ENCODE measurements at regions of chr16 and their contacts with region 1.

Region 1: GRCh38 chr16:58129097-58129936 is at the start of gene CFAP20:
- DNase-seq: peak; percentile 95 to 98
- H3K4me3 ChIP-seq: peak within 1 kb of the TSS; percentile 76 to 95 (median 82)
- H3K27ac ChIP-seq: peak within 1 kb of the TSS; percentile 80; the same call in 1 of the 2 replicates
- H3K4me1 ChIP-seq: peaks cover 2 to 8% (median 5%) of the 10 kb centered on the region in 4 experiments; a peak in 5 of 7 replicates
- H3K27me3 ChIP-seq: no peaks in the 10 kb centered on the region
- CTCF ChIP-seq: no peak
- EP300 ChIP-seq: no peak
- POLR2A ChIP-seq: peak; percentile 62 to 90
- RAD21 ChIP-seq: no peak
- total RNA-seq, gene CFAP20: 43.4 and 45.6 TPM in 2 replicates

Region 2: GRCh38 chr16:58018804-58019203 is 110.5 kb before region 1 on chr16:
- CTCF ChIA-PET with region 1: interaction called, 362 read pairs
- POLR2A ChIA-PET with region 1: interaction called, 20 read pairs
- DNase-seq: peak in 1 of 2 experiments; percentile 69
- H3K4me3 ChIP-seq: no peak overlapping the region
- H3K27ac ChIP-seq: no peak overlapping the region
- H3K4me1 ChIP-seq: peaks cover 0 to 12% (median 7%) of the 10 kb centered on the region in 4 experiments; a peak in 5 of 7 replicates
- H3K27me3 ChIP-seq: no peaks in the 10 kb centered on the region; a peak in 2 of 7 replicates
- CTCF ChIP-seq: peak; percentile 54 to 76 (median 74)
- EP300 ChIP-seq: no peak
- POLR2A ChIP-seq: no peak
- RAD21 ChIP-seq: peak; percentile 52 to 64; a peak in 3 of 4 replicates

Region 3: GRCh38 chr16:58025351-58026138 is 103.8 kb before region 1 on chr16 and contains the start of gene MMP15:
- CTCF ChIA-PET with region 1: interaction called, 362 read pairs
- POLR2A ChIA-PET with region 1: interaction called, 20 read pairs
- DNase-seq: peak; percentile 97 to 98
- H3K4me3 ChIP-seq: peak within 1 kb of the TSS; percentile 73 to 90 (median 82)
- H3K27ac ChIP-seq: no peak within 1 kb of the TSS
- H3K4me1 ChIP-seq: peaks cover 0 to 31% (median 20%) of the 10 kb centered on the region in 4 experiments; a peak in 6 of 7 replicates
- H3K27me3 ChIP-seq: no peaks in the 10 kb centered on the region; a peak in 3 of 7 replicates
- CTCF ChIP-seq: no peak
- EP300 ChIP-seq: no peak
- POLR2A ChIP-seq: no peak; a peak in 1 of 3 replicates
- RAD21 ChIP-seq: peak in 1 of 2 experiments; percentile 5; a peak in 1 of 4 replicates
- total RNA-seq, gene MMP15: 42.2 and 44.0 TPM in 2 replicates

Region 4: DNA sequence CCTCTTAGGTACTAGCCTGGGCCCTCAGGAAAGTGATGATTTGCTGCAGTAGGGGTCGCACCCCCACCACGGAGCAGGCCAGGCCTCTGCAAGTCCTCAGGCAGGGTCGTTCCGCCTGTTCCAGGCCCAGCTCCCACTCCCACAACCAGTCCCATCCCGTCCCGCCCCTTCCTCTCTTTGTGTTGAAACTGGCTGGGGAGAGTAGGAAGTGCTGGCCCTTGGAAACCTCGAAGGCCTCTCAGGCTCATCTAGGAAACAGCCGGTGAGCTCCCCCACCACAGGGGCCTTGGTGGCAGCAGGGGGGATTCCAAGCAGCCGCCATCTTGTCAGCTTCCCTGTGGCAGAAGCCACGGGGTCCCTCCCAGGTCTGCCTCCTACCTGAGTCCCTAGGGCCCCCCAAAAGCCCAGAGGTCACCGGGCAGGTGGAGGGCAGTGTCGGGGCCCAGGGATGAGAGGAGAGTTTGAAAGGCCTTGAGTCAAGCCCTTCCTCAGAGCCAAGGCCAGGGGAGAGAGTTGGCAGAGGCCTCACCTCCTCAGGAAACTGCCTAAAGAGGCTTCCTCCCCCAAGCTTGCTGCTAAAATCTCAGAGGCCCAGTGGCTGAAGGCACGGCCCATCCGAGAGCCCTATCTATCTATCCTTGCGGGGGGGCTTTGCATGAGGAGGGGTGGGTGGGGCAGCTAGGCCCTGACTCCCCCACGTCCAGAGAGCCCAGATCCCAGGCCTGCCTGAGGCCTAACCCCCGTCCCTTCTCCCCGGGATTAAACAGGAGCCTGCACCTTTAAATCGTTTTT is 81.6 kb before region 1 on chr16:
- CTCF ChIA-PET with region 1: interaction called, 15 read pairs
- POLR2A ChIA-PET with region 1: interaction called, 5 read pairs
- DNase-seq: no peak
- H3K4me3 ChIP-seq: no peak overlapping the region
- H3K27ac ChIP-seq: no peak overlapping the region
- H3K4me1 ChIP-seq: peaks cover 0 to 15% (median 8%) of the 10 kb centered on the region in 4 experiments; a peak in 4 of 7 replicates
- H3K27me3 ChIP-seq: no peaks in the 10 kb centered on the region
- CTCF ChIP-seq: peak in 2 of 3 experiments; percentile 10 to 15; a peak in 1 of 4 replicates
- EP300 ChIP-seq: no peak
- POLR2A ChIP-seq: no peak
- RAD21 ChIP-seq: peak; percentile 50 to 51

Region 5: GRCh38 chr16:58110571-58111301 is 18.6 kb before region 1 on chr16:
- CTCF ChIA-PET with region 1: interaction called, 21 read pairs
- POLR2A ChIA-PET with region 1: interaction called, 8 read pairs
- DNase-seq: no peak
- H3K4me3 ChIP-seq: no peak overlapping the region
- H3K27ac ChIP-seq: no peak overlapping the region
- H3K4me1 ChIP-seq: peaks cover 9 to 24% (median 21%) of the 10 kb centered on the region in 4 experiments
- H3K27me3 ChIP-seq: no peaks in the 10 kb centered on the region
- CTCF ChIP-seq: no peak
- EP300 ChIP-seq: no peak
- POLR2A ChIP-seq: no peak
- RAD21 ChIP-seq: peak in 1 of 2 experiments; percentile 27; a peak in 1 of 4 replicates

Measured in H1 (cell line).